ENCODE measurements at regions of chr18 and their contacts with region 1.

Region 1: DNA sequence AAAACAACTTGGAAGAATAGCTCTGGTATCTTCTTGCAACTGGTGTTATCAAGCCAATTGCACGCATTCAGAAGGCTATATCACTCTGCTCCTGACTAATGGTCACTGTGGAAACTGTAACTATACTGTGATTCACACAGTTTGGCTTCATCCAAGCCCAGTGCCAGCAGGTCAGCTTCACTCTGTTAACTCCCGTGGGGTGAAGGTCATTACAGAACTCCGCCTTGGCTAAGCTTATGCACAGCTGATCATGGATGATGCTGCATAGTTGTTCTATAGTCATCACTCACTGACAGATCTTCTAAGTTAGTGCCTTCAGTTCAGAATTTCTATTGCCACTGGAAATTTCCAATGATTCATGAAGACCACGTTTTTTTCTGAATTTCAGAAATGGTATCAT is 497.2 kb upstream of the NETO1 start:
- DNase-seq: no peak

Region 2: DNA sequence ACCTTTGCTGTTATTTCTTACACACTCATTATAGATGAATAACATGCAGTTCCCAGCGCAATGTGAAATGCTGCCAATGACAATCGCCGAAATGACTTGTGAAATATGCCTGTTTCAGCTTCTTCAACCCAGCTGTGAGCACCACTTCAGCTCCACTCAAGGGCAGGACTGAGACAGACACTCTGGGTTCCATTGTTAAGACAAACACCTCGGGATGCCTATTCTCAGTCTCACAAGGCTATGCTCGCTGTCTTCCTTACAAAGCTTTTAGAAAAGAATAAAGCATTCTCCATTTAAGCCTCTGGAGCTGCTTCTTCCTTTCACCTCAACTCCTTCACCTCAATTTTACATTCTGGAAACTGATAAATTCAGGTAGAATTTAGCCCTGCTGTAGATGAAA is 825.1 kb before region 1 on chr18:
- intact Hi-C with region 1: loop called in 1 of 2 experiments (anchors 5 kb)
- DNase-seq: no peak

Region 3: DNA sequence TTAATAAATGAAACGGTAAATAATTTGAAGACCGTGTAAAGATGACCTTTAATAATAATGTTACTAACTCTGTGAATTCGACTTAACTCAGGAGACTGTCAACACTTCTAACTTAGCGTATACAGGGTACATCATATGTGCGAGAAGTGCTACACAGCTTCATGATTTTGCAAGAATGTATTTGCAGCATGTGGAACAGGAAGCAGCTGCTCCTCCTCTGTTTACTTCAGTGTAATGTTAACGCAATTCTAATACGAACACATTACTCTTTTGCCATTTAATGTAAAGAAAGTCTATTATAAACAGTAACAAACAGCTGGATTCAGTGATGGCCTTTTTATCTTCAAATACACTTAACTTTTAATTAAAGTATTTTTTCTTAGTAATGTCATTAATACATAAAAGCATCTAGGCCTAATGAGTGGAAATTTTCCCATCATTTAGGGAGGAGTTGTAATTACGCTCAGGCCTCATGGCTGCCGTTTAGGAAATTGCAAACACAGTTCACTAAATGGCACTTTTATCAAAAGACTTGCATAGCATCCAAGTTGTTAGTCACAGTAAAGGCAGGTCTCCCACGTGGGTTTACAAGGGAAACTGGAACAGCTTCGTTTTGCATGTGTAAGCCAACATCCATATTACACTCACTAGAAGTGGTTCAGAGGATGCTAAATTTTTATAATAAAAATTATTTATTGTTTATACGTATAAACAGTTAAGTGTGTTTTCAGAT is 146.9 kb after region 1 on chr18:
- intact Hi-C with region 1: no loop called
- DNase-seq: no peak

Measured in posterior vena cava (tissue), 2 donors.